Left ventricle myocardium inferior (tissue), 1 donor: ENCODE measurements at regions of chr2 and their contacts with region 1.

Region 1: GRCh38 chr2:199979832-199980628 is 24.6 kb downstream of the MAIP1 start:
- DNase-seq: peak; percentile 84
- H3K4me3 ChIP-seq: peak overlapping the region; percentile 37
- H3K27ac ChIP-seq: no peak overlapping the region
- H3K4me1 ChIP-seq: peaks cover 9% of the 10 kb centered on the region
- H3K27me3 ChIP-seq: no peaks in the 10 kb centered on the region
- CTCF ChIP-seq: peak; percentile 90

Region 2: GRCh38 chr2:200483729-200484198 is 503.7 kb after region 1 on chr2:
- intact Hi-C with region 1: loop called (anchors 5 kb)
- DNase-seq: no peak
- H3K4me3 ChIP-seq: no peak overlapping the region
- H3K27ac ChIP-seq: no peak overlapping the region
- H3K4me1 ChIP-seq: peaks cover 7% of the 10 kb centered on the region
- H3K27me3 ChIP-seq: no peaks in the 10 kb centered on the region
- CTCF ChIP-seq: peak; percentile 46

Region 3: GRCh38 chr2:200695191-200695590 is 715.2 kb after region 1 on chr2:
- intact Hi-C with region 1: loop called (anchors 10 kb)
- DNase-seq: peak; percentile 58
- H3K4me3 ChIP-seq: no peak overlapping the region
- H3K27ac ChIP-seq: peak overlapping the region; percentile 30
- H3K4me1 ChIP-seq: peaks cover 4% of the 10 kb centered on the region
- H3K27me3 ChIP-seq: no peaks in the 10 kb centered on the region
- CTCF ChIP-seq: no peak